ENCODE measurements at regions of chr4 and their contacts with region 1.

Region 1: GRCh38 chr4:132297346-132297745 is 851.7 kb upstream of the PCDH10 start:
- DNase-seq: no peak
- H3K4me3 ChIP-seq: no peak overlapping the region
- H3K27ac ChIP-seq: no peak overlapping the region
- H3K4me1 ChIP-seq: no peaks in the 10 kb centered on the region
- CTCF ChIP-seq: no peak

Region 2: DNA sequence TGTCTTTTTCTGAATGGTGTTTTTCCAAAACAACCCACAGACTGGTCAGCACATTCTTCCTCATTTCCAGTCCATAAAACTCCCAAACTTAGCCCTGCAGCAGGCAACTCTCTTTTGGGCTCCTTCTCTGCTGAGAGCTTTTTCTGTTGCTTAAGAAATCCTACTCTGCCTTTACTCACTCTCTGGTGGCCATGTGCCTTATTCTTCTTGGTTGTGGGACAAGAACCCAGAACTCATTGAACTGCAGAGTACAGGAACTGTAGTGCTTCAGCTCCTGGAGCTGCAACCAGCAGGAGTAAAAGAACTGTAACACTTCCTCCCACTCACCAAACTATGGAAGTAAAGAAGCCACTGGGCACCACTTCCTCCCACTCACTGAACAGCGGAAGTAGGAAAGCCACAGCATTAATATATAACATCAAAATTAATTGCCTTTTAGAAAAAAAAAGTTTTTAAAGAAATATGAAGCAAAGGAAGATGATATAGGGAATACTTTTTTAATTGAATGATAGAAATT is 12.4 kb before region 1 on chr4:
- CTCF ChIA-PET with region 1: no interaction called
- POLR2A ChIA-PET with region 1: interaction called, 17 read pairs
- intact Hi-C with region 1: no loop called
- DNase-seq: peak; percentile 72
- H3K4me3 ChIP-seq: no peak overlapping the region
- H3K27ac ChIP-seq: no peak overlapping the region
- H3K4me1 ChIP-seq: no peaks in the 10 kb centered on the region
- CTCF ChIP-seq: no peak

Region 3: GRCh38 chr4:132809298-132810032 is 512.1 kb after region 1 on chr4:
- CTCF ChIA-PET with region 1: no interaction called
- POLR2A ChIA-PET with region 1: no interaction called
- intact Hi-C with region 1: no loop called
- DNase-seq: peak; percentile 2
- H3K4me3 ChIP-seq: no peak overlapping the region
- H3K27ac ChIP-seq: no peak overlapping the region
- H3K4me1 ChIP-seq: no peaks in the 10 kb centered on the region
- CTCF ChIP-seq: peak; percentile 29; the same call in 1 of the 2 replicates